Activated CD4-positive, alpha-beta memory T cell treated with anti-CD3 and anti-CD28 coated beads, Interleukin-2, amount 10 ng/mL, durations not matched to agents 7 days and 5 days (primary cell): ENCODE measurements at regions of chr10 and their contacts with region 1.

Region 1: GRCh38 chr10:74056036-74056818 is 58.3 kb downstream of the VCL start:
- DNase-seq: peak; percentile 45
- H3K4me3 Mint-ChIP-seq: peak overlapping the region; percentile 49
- H3K27ac Mint-ChIP-seq: peak overlapping the region; percentile 88
- H3K4me1 Mint-ChIP-seq: peaks cover 72% of the 10 kb centered on the region
- H3K27me3 Mint-ChIP-seq: no peaks in the 10 kb centered on the region

Region 2: DNA sequence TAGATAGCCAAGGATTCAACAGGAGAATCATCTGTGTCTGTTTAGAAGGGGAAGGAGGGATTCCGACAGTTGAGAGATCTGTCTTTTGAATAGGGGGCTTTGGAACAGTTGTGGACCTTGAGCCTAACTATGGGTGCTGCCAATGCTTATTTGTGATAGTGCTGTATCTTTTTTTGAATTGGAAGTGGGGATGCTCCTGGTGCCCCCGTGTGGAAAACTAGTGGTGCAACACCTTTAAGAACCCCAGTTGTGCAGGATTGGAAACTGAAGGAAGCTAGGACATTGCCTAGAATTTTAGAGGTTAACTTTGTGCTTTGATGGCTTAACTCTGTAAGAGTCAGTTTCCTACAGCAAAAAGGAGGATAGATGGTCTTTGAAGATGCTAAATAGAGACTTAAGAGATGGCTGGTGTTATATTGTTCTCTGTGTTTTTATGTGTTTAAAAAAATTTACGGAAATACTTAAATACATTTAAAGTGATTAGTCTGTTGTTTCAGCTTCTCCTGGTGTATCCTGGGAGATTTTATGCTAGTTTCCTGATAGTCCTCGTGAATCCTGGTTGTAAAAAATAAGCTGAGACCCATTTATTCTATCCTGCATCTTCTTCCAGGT is 25.1 kb after region 1 on chr10:
- CTCF ChIA-PET with region 1: interaction called, 4 read pairs
- POLR2A ChIA-PET with region 1: interaction called, 14 read pairs
- DNase-seq: peak; percentile 45
- H3K4me3 Mint-ChIP-seq: no peak overlapping the region
- H3K27ac Mint-ChIP-seq: no peak overlapping the region
- H3K4me1 Mint-ChIP-seq: peaks cover 57% of the 10 kb centered on the region
- H3K27me3 Mint-ChIP-seq: no peaks in the 10 kb centered on the region